ENCODE measurements at regions of chr7 and their contacts with region 1.

Region 1: DNA sequence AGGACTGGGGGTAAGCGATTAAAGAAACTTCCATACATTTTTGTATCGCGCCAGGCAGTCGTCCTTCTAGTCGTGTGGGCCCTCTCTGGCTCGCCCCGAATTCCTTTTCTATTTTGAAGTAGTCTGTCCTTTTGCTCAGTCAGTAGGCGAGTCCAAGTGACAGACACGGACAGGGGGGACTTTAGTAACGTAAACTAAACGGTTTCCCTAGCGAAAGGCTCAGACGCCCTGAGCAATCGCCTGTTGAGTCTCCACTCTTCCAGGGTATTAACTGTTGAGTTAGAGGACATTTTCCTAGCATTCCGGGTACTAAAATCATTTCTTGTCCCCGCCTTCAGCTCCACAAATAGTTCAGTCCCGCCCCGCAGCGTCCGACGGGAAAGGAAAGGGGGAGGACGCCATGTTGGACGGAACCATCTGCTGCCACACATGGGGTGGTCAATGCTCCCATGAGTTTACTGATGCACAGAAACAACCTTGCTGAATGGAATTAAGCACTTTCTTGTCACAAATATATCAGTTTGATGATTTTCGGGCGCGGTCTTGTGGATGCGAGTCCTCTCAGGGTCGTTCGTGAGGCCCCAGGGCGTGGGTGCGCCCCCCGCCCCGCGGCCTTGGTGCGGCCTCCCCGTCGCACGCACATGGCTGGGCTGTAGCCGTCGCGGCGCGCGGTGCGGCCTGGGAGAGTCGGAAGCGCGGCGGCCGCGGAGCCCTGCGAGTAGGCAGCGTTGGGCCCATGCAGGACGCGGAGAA is at the start of gene EIF3B:
- DNase-seq: peak; percentile 94
- ATAC-seq: peak; percentile 90
- H3K4me3 Mint-ChIP-seq: peak within 1 kb of the TSS; percentile 86
- H3K27ac Mint-ChIP-seq: peak within 1 kb of the TSS; percentile 99
- H3K4me1 Mint-ChIP-seq: peaks cover 37% of the 10 kb centered on the region
- H3K27me3 Mint-ChIP-seq: no peaks in the 10 kb centered on the region
- total RNA-seq, gene EIF3B: 185 to 227 TPM

Region 2: DNA sequence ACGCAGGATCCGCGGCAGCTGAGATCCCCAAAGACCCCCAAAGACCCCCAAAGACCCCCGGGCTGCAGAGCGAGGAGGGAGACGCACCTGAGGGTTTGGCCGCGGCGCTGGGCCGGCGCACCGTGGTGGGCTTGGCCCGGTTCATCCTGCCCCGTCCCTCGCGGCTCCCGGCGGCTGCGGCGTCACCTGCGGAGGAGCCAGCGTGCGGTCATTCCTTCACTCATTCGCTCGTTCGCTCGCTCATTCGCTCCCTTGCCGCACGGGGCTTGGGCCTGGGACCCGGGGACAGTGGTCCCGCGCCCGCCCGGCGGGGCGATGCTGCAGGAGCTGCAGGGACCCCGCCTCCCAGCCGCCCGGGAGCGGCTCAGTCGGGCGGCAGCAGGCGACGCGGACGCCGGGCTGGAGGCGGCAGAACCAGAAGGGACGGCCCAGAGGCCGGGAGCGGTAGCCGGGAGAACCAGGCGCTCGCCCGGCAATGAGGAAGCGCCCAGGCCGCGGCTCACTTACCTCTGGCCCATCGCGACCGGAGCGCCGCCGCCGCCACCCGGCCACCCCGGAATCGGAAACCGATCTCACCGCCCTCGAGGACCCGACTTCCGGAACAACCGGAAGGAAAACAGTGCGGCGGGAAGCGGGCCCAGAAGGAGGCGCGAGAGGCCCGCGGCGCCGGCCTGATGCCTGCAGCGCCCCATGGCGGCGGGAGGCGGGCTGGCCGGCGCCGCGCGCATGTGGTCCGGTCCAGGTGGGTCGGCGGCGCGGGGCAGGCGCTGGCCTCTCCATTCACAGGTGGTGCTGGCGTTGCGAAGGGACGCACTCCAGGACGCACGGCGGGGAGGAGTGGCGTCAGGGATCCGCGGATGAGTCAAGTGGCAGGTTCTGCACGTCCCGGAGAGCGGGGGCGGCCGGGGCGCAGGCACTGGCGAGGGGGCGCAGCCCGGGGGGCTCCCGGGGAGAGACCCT is 850.3 kb before region 1 on chr7 and contains the start of gene INTS1:
- CTCF ChIA-PET with region 1: no interaction called
- POLR2A ChIA-PET with region 1: no interaction called
- intact Hi-C with region 1: loop called in 1 of 2 experiments (anchors 1 kb)
- DNase-seq: peak; percentile 95
- ATAC-seq: peak; percentile 88
- H3K4me3 Mint-ChIP-seq: peak within 1 kb of the TSS; percentile 85
- H3K27ac Mint-ChIP-seq: peak within 1 kb of the TSS; percentile 87
- H3K4me1 Mint-ChIP-seq: peaks cover 41% of the 10 kb centered on the region
- H3K27me3 Mint-ChIP-seq: no peaks in the 10 kb centered on the region
- total RNA-seq, gene INTS1: 78.1 to 81.7 TPM

Region 3: DNA sequence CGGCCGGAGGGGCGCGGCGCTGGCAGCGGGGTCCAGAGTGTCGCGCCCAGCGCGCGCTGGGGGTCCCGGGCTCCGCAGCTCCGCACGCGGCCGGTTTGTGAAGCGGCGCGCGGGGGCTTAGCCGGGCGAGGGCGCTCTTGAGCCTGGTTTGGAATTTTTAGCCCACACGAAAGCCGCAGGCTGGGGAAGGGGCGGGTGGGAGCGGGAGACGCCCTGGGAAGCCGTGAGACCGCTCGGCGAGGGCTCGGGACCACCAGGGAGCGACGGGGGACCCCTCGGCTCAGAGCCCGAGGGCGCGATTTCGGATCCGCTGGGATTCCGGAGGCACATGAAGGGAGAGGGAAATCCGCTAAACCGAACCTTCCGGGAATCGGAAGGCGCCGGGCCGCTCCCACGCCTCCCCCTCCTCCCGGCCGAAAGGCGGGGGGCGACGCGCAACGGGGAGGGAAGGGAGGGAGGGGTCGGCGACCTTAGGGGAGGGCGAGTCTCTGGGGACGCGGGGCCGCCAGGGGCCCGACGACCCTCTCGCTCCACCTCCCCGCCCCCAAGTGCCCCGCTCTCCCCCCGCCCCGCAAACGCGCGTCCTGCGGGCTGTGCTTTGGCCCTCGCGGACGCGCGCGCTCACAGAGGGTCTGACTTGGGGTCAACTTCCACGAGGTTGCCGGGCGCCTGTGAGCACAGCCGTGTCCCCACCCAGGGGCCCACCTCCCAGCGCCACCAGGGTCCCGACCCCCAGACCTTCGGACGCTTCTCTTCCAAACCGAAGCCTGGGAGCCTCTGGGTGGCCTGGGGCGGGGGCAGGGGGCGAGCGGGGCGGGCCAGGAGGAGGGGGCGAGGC is 689.4 kb before region 1 on chr7:
- CTCF ChIA-PET with region 1: no interaction called
- POLR2A ChIA-PET with region 1: no interaction called
- intact Hi-C with region 1: loop called (anchors 5 to 10 kb)
- DNase-seq: peak; percentile 77
- ATAC-seq: peak; percentile 36
- H3K4me3 Mint-ChIP-seq: no peak overlapping the region
- H3K27ac Mint-ChIP-seq: no peak overlapping the region
- H3K4me1 Mint-ChIP-seq: peaks cover 8% of the 10 kb centered on the region
- H3K27me3 Mint-ChIP-seq: peaks cover 24% of the 10 kb centered on the region

Region 4: GRCh38 chr7:2104107-2104710 is 250.2 kb before region 1 on chr7:
- CTCF ChIA-PET with region 1: interaction called, 3 read pairs
- POLR2A ChIA-PET with region 1: no interaction called
- intact Hi-C with region 1: loop called in 1 of 2 experiments (anchors 1 kb)
- DNase-seq: peak; percentile 88
- ATAC-seq: peak; percentile 74
- H3K4me3 Mint-ChIP-seq: no peak overlapping the region
- H3K27ac Mint-ChIP-seq: peak overlapping the region; percentile 51
- H3K4me1 Mint-ChIP-seq: peaks cover 35% of the 10 kb centered on the region
- H3K27me3 Mint-ChIP-seq: no peaks in the 10 kb centered on the region

Region 5: GRCh38 chr7:2248984-2249694 is 105.2 kb before region 1 on chr7:
- CTCF ChIA-PET with region 1: no interaction called
- POLR2A ChIA-PET with region 1: no interaction called
- intact Hi-C with region 1: loop called in 1 of 2 experiments (anchors 5 kb)
- DNase-seq: no peak
- ATAC-seq: peak; percentile 32
- H3K4me3 Mint-ChIP-seq: no peak overlapping the region
- H3K27ac Mint-ChIP-seq: peak overlapping the region; percentile 55
- H3K4me1 Mint-ChIP-seq: peaks cover 12% of the 10 kb centered on the region
- H3K27me3 Mint-ChIP-seq: no peaks in the 10 kb centered on the region

Region 6: GRCh38 chr7:2279896-2280295 is 74.5 kb before region 1 on chr7:
- CTCF ChIA-PET with region 1: no interaction called
- POLR2A ChIA-PET with region 1: no interaction called
- intact Hi-C with region 1: no loop called
- DNase-seq: no peak
- ATAC-seq: no peak
- H3K4me3 Mint-ChIP-seq: no peak overlapping the region
- H3K27ac Mint-ChIP-seq: no peak overlapping the region
- H3K4me1 Mint-ChIP-seq: peaks cover 4% of the 10 kb centered on the region
- H3K27me3 Mint-ChIP-seq: no peaks in the 10 kb centered on the region

Region 7: DNA sequence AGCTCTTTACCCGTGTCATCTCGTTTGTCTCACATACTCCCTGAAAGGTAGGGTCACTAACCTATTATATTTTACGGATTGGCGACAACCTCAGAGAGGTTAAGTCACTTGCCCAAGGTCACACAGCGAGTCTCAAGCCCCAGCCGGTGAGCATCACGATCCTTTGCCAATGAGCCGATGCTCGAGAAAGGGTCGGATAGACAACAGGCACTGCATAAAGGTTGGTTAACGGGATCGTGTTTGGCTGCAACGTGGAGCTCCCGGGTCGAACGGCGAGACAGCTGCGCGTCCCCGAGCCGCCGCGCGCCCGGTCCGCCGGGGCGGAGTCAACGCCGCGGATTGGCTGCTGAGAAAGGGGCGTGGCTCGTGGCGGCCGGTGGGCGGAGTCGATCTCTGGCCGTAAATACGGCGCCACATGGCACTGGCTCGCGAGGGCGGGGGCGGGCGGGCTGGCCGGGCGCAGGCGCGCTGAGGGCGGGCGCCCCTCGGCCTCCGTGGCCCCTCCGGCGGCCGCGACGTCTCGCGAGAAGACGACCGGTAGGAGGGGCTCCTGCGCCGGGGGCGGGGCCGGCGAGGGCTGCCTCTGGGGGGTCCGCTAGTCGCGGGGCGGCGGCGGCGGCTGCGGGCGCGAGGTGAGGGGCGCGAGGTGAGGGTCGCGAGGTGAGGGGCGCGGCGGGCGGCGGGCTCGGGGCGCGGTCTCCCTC is 48.8 kb after region 1 on chr7 and contains the start of gene CHST12:
- CTCF ChIA-PET with region 1: no interaction called
- POLR2A ChIA-PET with region 1: interaction called, 4 read pairs
- intact Hi-C with region 1: loop called (anchors 1 kb)
- DNase-seq: peak; percentile 97
- ATAC-seq: peak; percentile 70
- H3K4me3 Mint-ChIP-seq: peak within 1 kb of the TSS; percentile 79
- H3K27ac Mint-ChIP-seq: no peak within 1 kb of the TSS
- H3K4me1 Mint-ChIP-seq: peaks cover 41% of the 10 kb centered on the region
- H3K27me3 Mint-ChIP-seq: peaks cover 6% of the 10 kb centered on the region
- total RNA-seq, gene CHST12: 1.8 to 1.9 TPM

Region 8: DNA sequence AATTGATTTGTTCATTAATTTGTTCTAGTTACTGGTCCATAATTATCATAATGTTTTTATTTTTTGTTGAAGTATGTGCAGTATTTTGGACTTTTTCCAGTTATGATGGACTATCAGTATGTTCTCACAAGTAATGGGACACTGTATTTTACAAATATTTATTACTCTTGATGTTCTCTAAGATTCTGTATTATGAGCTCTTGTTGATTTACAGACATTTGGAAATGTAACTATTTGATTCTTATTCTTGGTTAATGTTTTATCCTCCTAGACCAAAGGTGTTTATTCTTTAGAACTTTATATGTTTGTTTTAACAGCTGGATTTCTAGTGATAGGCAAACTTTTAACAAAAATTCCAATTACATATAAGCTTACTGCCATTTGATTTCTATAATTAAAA is 1147.3 kb after region 1 on chr7:
- CTCF ChIA-PET with region 1: no interaction called
- POLR2A ChIA-PET with region 1: no interaction called
- intact Hi-C with region 1: no loop called
- DNase-seq: no peak
- ATAC-seq: no peak
- H3K4me3 Mint-ChIP-seq: no peak overlapping the region
- H3K27ac Mint-ChIP-seq: no peak overlapping the region
- H3K4me1 Mint-ChIP-seq: no peaks in the 10 kb centered on the region
- H3K27me3 Mint-ChIP-seq: no peaks in the 10 kb centered on the region